ENCODE measurements at regions of chr5 and their contacts with region 1.

Region 1: GRCh38 chr5:168549554-168549953 is 20.4 kb downstream of the FBLL1 start:
- DNase-seq: no peak
- H3K4me3 ChIP-seq: no peak overlapping the region
- H3K27ac ChIP-seq: no peak overlapping the region
- H3K4me1 ChIP-seq: no peaks in the 10 kb centered on the region
- H3K27me3 ChIP-seq: no peaks in the 10 kb centered on the region
- CTCF ChIP-seq: no peak

Region 2: GRCh38 chr5:168513861-168514428 is 35.6 kb before region 1 on chr5:
- CTCF ChIA-PET with region 1: no interaction called
- POLR2A ChIA-PET with region 1: no interaction called
- intact Hi-C with region 1: loop called (anchors 5 kb)
- DNase-seq: no peak
- H3K4me3 ChIP-seq: no peak overlapping the region
- H3K27ac ChIP-seq: no peak overlapping the region
- H3K4me1 ChIP-seq: no peaks in the 10 kb centered on the region
- H3K27me3 ChIP-seq: no peaks in the 10 kb centered on the region
- CTCF ChIP-seq: no peak

Measured in PC-9 (cell line).